B cell (primary cell): ENCODE measurements at regions of chr4 and their contacts with region 1.

Region 1: DNA sequence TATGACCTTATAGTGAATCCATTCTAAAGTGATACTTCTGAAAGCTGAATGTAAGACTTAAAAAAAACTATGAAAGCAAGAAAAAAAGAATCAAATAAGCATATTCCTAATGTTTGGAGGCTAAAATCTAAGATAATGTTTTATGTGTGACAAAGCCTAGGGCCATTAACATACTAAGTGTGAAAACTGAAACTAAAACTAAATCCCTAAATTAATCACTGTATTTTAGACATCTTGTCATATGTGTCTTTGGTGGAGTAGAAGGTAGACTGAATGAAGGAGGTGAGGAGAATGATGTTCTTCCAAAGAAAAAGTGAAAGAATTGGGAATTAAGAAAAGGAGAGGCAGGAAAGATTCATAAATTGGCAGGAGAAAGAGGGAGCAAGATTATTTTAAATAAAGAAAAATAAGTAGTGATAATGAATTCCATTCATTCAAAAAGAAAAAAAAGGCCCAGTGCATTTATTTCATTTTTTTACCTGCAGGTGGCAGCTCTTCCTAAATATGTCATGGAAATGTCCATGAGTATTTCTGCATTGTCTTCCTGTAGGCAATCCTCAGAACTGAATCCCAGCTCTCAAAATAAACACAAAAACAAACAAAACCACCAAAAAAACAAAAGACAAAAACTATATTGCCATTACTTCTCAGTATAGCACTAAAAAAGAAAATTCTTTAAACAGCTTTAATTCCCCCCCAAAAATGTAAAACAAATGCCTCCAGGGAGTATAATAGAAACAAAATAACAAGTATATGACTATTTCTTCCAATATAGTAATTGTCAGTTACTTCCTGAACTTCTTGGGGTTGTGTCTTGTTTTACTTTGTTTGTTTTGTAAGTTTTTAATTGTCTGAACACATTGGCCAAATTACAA is 17.0 kb upstream of the AP1AR start:
- DNase-seq: peak; percentile 38
- ATAC-seq: no peak
- H3K4me3 ChIP-seq: no peak overlapping the region
- H3K4me3 Mint-ChIP-seq: no peak overlapping the region
- H3K27ac ChIP-seq: no peak overlapping the region
- H3K27ac Mint-ChIP-seq: no peak overlapping the region
- H3K4me1 ChIP-seq: no peaks in the 10 kb centered on the region
- H3K4me1 Mint-ChIP-seq: no peaks in the 10 kb centered on the region
- H3K27me3 ChIP-seq: no peaks in the 10 kb centered on the region
- H3K27me3 Mint-ChIP-seq: no peaks in the 10 kb centered on the region
- CTCF ChIP-seq: peak; percentile 70

Region 2: GRCh38 chr4:112266821-112267220 is 52.2 kb after region 1 on chr4:
- CTCF ChIA-PET with region 1: interaction called, 3 read pairs
- POLR2A ChIA-PET with region 1: no interaction called
- intact Hi-C with region 1: loop called (anchors 2 kb)
- DNase-seq: peak; percentile 23
- ATAC-seq: no peak
- H3K4me3 ChIP-seq: no peak overlapping the region
- H3K4me3 Mint-ChIP-seq: no peak overlapping the region
- H3K27ac ChIP-seq: no peak overlapping the region
- H3K27ac Mint-ChIP-seq: no peak overlapping the region
- H3K4me1 ChIP-seq: no peaks in the 10 kb centered on the region
- H3K4me1 Mint-ChIP-seq: no peaks in the 10 kb centered on the region
- H3K27me3 ChIP-seq: no peaks in the 10 kb centered on the region
- H3K27me3 Mint-ChIP-seq: no peaks in the 10 kb centered on the region
- CTCF ChIP-seq: peak; percentile 62